Mammary epithelial cell (primary cell): ENCODE measurements at regions of chrX and their contacts with region 1.

Region 1: DNA sequence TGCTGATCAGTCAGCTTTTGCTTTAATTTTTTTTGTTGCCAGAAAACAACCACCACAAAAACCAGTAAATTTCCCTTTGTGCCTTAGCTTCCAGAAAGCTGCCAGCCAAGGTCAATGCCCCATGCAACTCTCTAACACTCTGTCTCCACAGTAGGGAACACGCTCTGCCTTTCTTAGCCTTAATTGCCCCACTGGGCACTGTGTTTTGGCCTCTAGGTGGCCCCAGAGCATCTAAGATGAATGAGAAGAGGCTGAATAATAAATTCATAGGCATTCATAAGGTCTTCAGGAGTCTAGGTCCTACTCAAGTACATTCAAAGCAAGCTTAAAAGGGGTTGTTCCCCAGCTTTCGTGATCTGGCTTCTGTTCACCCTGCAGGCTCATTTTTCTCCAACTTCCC is 57.7 kb upstream of the PASD1 start:
- DNase-seq: peak; percentile 21
- H3K4me3 ChIP-seq: no peak overlapping the region
- H3K27ac ChIP-seq: no peak overlapping the region
- H3K4me1 ChIP-seq: no peaks in the 10 kb centered on the region
- H3K27me3 ChIP-seq: no peaks in the 10 kb centered on the region
- CTCF ChIP-seq: peak; percentile 54 to 69

Region 2: DNA sequence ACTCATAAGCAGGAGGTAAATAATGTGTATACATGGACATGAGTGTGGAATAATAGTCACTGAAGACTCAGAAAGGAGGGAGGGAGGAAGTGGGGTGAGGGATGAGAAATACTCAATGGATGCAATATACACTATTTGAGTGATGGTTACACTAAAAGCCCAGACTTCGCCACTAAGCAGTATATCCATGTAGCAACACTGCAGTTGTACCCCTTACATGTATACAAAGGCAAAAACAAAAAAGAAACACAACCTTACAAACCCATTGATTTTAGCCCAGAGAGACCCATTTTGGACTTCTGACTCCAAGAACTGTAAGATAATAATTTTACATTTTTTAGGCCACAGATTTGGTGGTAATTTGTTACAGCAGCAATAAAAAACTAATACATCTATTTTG is 57.3 kb before region 1 on chrX:
- CTCF ChIA-PET with region 1: no interaction called
- dilution Hi-C with region 1: loop called (anchors 5 kb)
- in situ Hi-C with region 1: no loop called
- intact Hi-C with region 1: no loop called
- DNase-seq: no peak
- H3K4me3 ChIP-seq: no peak overlapping the region
- H3K27ac ChIP-seq: no peak overlapping the region
- H3K4me1 ChIP-seq: no peaks in the 10 kb centered on the region
- H3K27me3 ChIP-seq: no peaks in the 10 kb centered on the region
- CTCF ChIP-seq: no peak

Region 3: GRCh38 chrX:151633157-151633556 is 127.4 kb after region 1 on chrX:
- CTCF ChIA-PET with region 1: no interaction called
- dilution Hi-C with region 1: no loop called
- in situ Hi-C with region 1: no loop called
- intact Hi-C with region 1: no loop called
- DNase-seq: no peak
- H3K4me3 ChIP-seq: no peak overlapping the region
- H3K27ac ChIP-seq: no peak overlapping the region
- H3K4me1 ChIP-seq: no peaks in the 10 kb centered on the region
- H3K27me3 ChIP-seq: no peaks in the 10 kb centered on the region
- CTCF ChIP-seq: no peak

Region 4: DNA sequence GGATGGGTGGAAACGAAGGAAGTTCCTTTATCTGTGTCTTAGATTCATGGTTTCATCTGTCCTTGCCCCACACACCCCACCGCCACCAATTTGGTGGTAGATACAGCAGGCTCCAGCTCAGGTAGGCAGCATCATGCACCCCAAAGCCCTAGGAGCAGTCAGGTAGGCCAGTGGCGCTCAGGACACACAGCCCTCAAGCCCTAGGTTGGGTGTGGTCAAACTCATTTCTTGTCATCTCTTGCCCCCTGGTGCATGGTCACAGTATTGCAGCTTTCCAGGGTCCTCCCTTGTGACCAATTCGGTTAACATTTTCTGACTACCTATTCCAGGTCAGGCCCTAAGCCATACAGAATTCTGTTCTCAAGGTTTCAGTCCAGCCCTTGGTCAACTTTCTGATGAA is 175.0 kb after region 1 on chrX:
- CTCF ChIA-PET with region 1: no interaction called
- dilution Hi-C with region 1: no loop called
- in situ Hi-C with region 1: loop called (anchors 10 kb)
- intact Hi-C with region 1: loop called (anchors 1 kb)
- DNase-seq: peak; percentile 8
- H3K4me3 ChIP-seq: no peak overlapping the region
- H3K27ac ChIP-seq: no peak overlapping the region
- H3K4me1 ChIP-seq: no peaks in the 10 kb centered on the region
- H3K27me3 ChIP-seq: no peaks in the 10 kb centered on the region
- CTCF ChIP-seq: peak; percentile 55 to 68